ENCODE measurements at regions of chr6 and their contacts with region 1.

Region 1: DNA sequence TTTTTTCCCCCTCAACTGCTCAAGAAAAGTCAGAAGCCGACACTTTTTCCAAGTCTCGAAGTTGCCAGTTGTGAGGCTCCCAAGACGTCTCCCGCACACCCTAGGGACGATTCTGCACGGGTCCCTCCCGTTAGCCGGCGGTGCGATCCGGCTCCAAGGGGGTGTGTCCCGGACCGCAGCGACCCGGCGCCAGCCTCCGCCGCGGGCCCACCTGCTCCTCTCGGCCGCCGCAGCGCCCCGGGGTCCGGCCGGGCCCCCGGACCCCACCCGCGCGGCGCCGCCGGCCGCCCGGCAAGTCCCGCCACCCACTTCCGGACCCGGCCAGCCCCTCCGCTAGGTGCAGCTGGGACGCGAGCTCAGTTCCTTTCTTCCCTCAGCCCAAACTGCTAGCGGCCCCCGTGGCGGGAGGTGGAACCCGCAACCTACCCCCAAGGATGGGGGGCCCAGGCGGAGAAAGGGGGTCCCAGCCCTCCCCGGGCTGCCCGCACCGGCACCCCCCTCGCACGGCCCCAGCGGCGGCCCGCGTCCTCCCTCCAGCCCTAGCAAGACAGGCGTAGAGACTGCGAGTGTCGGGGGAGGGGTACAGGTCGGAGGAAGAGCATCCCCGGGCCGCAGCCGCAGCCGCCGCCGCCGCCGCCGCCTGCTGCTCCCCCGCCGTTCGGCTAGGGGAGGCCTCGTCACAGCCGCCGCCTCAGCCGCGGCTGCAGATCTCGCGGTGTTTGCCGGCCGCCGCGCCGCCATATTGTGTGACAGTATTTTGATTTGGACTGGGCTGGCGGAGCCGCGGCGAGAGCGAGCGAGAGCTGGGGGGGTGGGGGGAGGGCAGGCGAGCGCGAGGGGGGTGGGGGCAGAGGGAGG is 485 bp upstream of the TAB2 start:
- DNase-seq: peak; percentile 94
- ATAC-seq: peak; percentile 71
- H3K4me3 Mint-ChIP-seq: peak overlapping the region; percentile 88
- H3K27ac Mint-ChIP-seq: peak overlapping the region; percentile 92
- H3K4me1 Mint-ChIP-seq: peaks cover 23% of the 10 kb centered on the region
- H3K27me3 Mint-ChIP-seq: no peaks in the 10 kb centered on the region

Region 2: DNA sequence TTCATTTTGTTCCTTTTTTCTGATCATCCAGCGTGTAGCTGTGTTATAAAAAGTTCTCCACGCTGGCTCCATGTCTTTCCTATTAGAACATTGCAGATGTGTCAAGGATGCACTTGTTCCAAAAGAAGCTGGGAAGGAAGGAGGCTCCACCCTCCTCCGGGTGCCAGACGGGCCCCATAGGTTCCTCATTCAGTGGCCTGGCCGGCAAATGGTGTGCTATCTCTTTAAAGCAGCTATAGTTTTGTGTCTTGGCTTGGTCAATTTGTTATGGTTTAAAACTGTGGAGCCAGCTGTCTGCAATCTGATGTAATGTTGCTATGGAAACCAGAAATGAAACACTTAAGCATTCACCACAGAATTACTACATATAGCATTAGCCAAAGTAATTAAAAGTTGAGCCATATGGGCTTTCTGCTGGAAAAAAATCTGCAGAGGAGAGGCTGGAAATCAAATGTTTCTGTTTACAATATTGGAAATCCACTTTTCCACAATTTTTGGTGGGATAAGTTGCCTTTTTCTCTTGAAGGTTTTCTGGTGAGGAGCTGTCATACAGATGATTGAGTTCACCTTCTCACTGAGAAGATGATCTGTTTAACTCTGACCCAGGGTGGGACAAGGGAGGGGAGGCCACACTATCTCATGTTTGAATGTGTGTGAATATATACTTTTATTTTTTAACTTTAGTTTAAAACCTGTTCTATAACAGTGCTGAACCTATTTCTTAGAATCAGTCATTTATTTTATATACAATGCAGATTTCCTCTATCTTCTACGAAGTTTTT is 807.0 kb before region 1 on chr6:
- CTCF ChIA-PET with region 1: no interaction called
- POLR2A ChIA-PET with region 1: no interaction called
- intact Hi-C with region 1: no loop called
- DNase-seq: no peak
- ATAC-seq: no peak
- H3K4me3 Mint-ChIP-seq: no peak overlapping the region
- H3K27ac Mint-ChIP-seq: no peak overlapping the region
- H3K4me1 Mint-ChIP-seq: no peaks in the 10 kb centered on the region
- H3K27me3 Mint-ChIP-seq: peaks cover 35% of the 10 kb centered on the region

Region 3: GRCh38 chr6:149082286-149082707 is 234.7 kb before region 1 on chr6:
- CTCF ChIA-PET with region 1: interaction called, 6 read pairs
- POLR2A ChIA-PET with region 1: no interaction called
- intact Hi-C with region 1: loop called (anchors 1 to 2 kb)
- DNase-seq: peak; percentile 94
- ATAC-seq: peak; percentile 79
- H3K4me3 Mint-ChIP-seq: no peak overlapping the region
- H3K27ac Mint-ChIP-seq: peak overlapping the region; percentile 52
- H3K4me1 Mint-ChIP-seq: peaks cover 51% of the 10 kb centered on the region
- H3K27me3 Mint-ChIP-seq: no peaks in the 10 kb centered on the region

Region 4: GRCh38 chr6:149147938-149148718 is 168.9 kb before region 1 on chr6:
- CTCF ChIA-PET with region 1: no interaction called
- POLR2A ChIA-PET with region 1: interaction called, 3 read pairs
- intact Hi-C with region 1: loop called in 1 of 2 experiments (anchors 2 kb)
- DNase-seq: no peak
- ATAC-seq: peak; percentile 63
- H3K4me3 Mint-ChIP-seq: peak overlapping the region; percentile 9
- H3K27ac Mint-ChIP-seq: peak overlapping the region; percentile 82
- H3K4me1 Mint-ChIP-seq: peaks cover 60% of the 10 kb centered on the region
- H3K27me3 Mint-ChIP-seq: no peaks in the 10 kb centered on the region

Region 5: GRCh38 chr6:149235130-149235561 is 81.9 kb before region 1 on chr6:
- CTCF ChIA-PET with region 1: no interaction called
- POLR2A ChIA-PET with region 1: interaction called, 10 read pairs
- intact Hi-C with region 1: loop called (anchors 1 kb)
- DNase-seq: peak; percentile 20
- ATAC-seq: no peak
- H3K4me3 Mint-ChIP-seq: no peak overlapping the region
- H3K27ac Mint-ChIP-seq: peak overlapping the region; percentile 98
- H3K4me1 Mint-ChIP-seq: peaks cover 44% of the 10 kb centered on the region
- H3K27me3 Mint-ChIP-seq: no peaks in the 10 kb centered on the region

Region 6: GRCh38 chr6:149335924-149336608 is 19.0 kb after region 1 on chr6:
- CTCF ChIA-PET with region 1: interaction called, 49 read pairs
- POLR2A ChIA-PET with region 1: no interaction called
- intact Hi-C with region 1: loop called (anchors 1 kb)
- DNase-seq: peak; percentile 83
- ATAC-seq: peak; percentile 95
- H3K4me3 Mint-ChIP-seq: peak overlapping the region; percentile 59
- H3K27ac Mint-ChIP-seq: peak overlapping the region; percentile 99
- H3K4me1 Mint-ChIP-seq: peaks cover 85% of the 10 kb centered on the region
- H3K27me3 Mint-ChIP-seq: no peaks in the 10 kb centered on the region

Region 7: DNA sequence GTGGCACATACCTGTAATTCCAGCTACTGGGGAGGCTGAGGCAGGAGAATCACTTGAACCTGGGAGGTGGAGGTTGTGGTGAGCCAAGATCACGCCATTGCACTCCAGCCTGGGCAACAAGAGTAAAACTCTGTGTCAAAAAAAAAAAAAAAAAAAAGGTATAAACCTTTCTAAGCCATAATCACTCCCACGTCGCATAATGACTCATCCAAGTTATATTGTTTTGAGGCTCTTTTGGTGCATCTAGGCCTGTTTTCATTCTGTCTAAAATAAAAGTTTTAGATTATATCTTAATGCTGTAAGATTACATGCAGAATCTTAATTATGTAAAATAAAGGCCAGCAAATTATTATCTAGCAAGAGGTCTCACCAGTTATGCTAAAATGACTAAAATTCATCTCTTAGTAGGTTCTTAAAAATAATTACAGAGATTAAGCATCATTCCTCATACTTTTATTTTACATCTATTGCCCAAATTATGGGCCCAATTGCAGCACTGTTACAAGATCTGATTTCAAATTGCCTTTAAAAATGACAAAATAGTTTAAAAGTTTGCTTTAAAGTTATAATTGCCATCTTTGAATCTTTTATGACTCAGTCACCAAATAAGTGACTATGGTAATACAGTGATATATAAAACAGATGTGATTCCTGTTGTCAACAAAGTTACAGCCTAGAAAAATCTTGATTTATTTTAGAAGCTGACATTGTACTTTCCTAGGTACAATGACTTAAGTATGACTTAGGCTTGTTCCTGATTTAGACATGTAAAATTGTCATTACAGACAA is 72.7 kb after region 1 on chr6:
- CTCF ChIA-PET with region 1: no interaction called
- POLR2A ChIA-PET with region 1: no interaction called
- intact Hi-C with region 1: loop called in 1 of 2 experiments (anchors 5 kb)
- DNase-seq: no peak
- ATAC-seq: peak; percentile 59
- H3K4me3 Mint-ChIP-seq: no peak overlapping the region
- H3K27ac Mint-ChIP-seq: no peak overlapping the region
- H3K4me1 Mint-ChIP-seq: peaks cover 68% of the 10 kb centered on the region
- H3K27me3 Mint-ChIP-seq: no peaks in the 10 kb centered on the region

Region 8: DNA sequence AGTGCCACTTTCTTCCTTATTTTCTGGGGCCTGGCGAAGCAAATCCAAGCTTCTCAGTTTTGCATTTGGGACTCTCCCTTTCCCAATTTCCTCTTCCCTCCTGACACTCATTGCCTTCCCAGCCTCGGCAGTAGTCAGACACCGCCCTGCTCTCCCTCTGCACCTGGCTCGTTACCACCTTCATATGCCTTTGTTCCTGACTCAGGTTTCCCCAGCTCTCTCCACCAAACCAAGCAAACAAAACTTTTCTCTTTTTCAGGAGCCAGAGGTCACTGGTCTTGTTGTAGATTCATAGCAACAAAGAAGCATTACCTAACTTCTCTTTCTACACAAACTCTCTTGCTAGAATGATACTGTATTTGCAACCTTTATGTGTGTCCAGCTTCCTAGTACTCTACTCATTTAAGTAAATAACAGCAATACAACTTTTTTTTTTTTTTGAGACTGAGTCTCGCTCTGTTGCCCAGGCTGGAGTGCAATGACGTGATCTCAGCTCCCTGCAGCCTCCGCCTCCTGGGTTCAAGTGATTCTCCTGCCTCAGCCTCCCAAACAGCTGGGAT is 176.8 kb after region 1 on chr6:
- CTCF ChIA-PET with region 1: no interaction called
- POLR2A ChIA-PET with region 1: interaction called, 3 read pairs
- intact Hi-C with region 1: loop called in 1 of 2 experiments (anchors 2 kb)
- DNase-seq: no peak
- ATAC-seq: no peak
- H3K4me3 Mint-ChIP-seq: no peak overlapping the region
- H3K27ac Mint-ChIP-seq: peak overlapping the region; percentile 92
- H3K4me1 Mint-ChIP-seq: peaks cover 88% of the 10 kb centered on the region
- H3K27me3 Mint-ChIP-seq: no peaks in the 10 kb centered on the region